Activated CD4-positive, alpha-beta T cell treated with anti-CD3 and anti-CD28 coated beads, Interleukin-2, amount 10 ng/mL, durations not matched to agents 24 days and 14 days (primary cell): ENCODE measurements at regions of chr1 and their contacts with region 1.

Region 1: DNA sequence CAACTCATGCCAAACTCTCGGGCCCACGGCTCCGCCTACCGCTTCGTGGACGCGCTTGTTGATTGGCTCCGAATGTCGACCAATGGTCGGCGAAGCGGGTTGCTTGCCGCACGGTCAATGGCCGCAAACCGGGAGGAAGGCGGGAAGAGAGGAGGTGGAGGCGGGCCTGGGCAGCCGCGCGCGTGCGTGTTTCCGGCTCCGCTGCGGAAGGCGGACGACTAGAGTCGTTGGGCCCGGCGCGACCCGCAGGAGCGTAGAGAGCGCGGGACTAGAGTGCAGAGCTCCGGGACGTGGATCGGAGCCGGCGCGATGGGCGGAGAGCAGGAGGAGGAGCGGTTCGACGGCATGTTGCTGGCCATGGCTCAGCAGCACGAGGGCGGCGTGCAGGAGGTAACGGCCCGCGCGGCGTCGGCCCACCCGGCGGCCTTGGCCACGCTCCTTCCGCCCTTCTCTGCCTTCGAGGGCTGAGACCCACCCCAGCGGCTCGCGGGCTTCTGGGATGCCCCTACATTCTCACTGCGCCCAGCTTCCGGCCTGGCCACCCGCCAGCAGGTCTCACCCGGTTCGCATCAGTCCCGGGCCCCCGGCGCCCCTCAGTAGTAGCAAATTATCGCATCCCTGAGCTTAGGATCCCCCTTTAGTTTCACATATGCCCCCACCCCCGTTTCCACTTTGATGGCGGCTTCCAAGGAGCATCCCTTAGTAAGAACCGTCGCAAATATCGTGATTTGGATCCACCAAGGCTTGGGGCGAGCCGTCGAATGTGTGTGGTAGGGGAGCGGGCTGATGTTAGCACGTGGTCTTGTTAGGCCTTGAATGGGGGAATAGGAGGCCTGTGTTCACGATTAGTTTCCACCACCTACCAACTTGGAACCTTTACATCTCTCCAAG is at the start of gene NUDC:
- DNase-seq: peak; percentile 99
- H3K4me3 Mint-ChIP-seq: peak within 1 kb of the TSS; percentile 99
- H3K27ac Mint-ChIP-seq: peak within 1 kb of the TSS; percentile 99
- H3K4me1 Mint-ChIP-seq: peaks cover 29% of the 10 kb centered on the region
- H3K27me3 Mint-ChIP-seq: no peaks in the 10 kb centered on the region
- total RNA-seq, gene NUDC: 169 and 171 TPM in 2 replicates

Region 2: GRCh38 chr1:26431979-26432695 is 489.6 kb before region 1 on chr1 and contains the start of gene DHDDS:
- intact Hi-C with region 1: loop called (anchors 1 kb)
- DNase-seq: peak; percentile 100
- H3K4me3 Mint-ChIP-seq: peak within 1 kb of the TSS; percentile 98
- H3K27ac Mint-ChIP-seq: peak within 1 kb of the TSS; percentile 95
- H3K4me1 Mint-ChIP-seq: peaks cover 17% of the 10 kb centered on the region
- H3K27me3 Mint-ChIP-seq: peaks cover 5% of the 10 kb centered on the region
- total RNA-seq, gene DHDDS: 57.0 and 60.2 TPM in 2 replicates

Region 3: GRCh38 chr1:26541816-26542711 is 379.7 kb before region 1 on chr1:
- intact Hi-C with region 1: loop called (anchors 1 kb)
- DNase-seq: peak; percentile 93
- H3K4me3 Mint-ChIP-seq: peak overlapping the region; percentile 83
- H3K27ac Mint-ChIP-seq: peak overlapping the region; percentile 91
- H3K4me1 Mint-ChIP-seq: peaks cover 78% of the 10 kb centered on the region
- H3K27me3 Mint-ChIP-seq: no peaks in the 10 kb centered on the region

Region 4: GRCh38 chr1:26889551-26890466 is 32.0 kb before region 1 on chr1 and contains the start of gene GPN2:
- intact Hi-C with region 1: loop called (anchors 1 kb)
- DNase-seq: peak; percentile 95
- H3K4me3 Mint-ChIP-seq: peak within 1 kb of the TSS; percentile 96
- H3K27ac Mint-ChIP-seq: peak within 1 kb of the TSS; percentile 94
- H3K4me1 Mint-ChIP-seq: peaks cover 22% of the 10 kb centered on the region
- H3K27me3 Mint-ChIP-seq: no peaks in the 10 kb centered on the region
- total RNA-seq, gene GPN2: 41.8 and 47.1 TPM in 2 replicates

Region 5: GRCh38 chr1:26900001-26900814 is 21.6 kb before region 1 on chr1 and contains the start of gene GPATCH3:
- intact Hi-C with region 1: loop called (anchors 2 kb)
- DNase-seq: peak; percentile 96
- H3K4me3 Mint-ChIP-seq: peak within 1 kb of the TSS; percentile 96
- H3K27ac Mint-ChIP-seq: peak within 1 kb of the TSS; percentile 99
- H3K4me1 Mint-ChIP-seq: peaks cover 20% of the 10 kb centered on the region
- H3K27me3 Mint-ChIP-seq: no peaks in the 10 kb centered on the region
- total RNA-seq, gene GPATCH3: 12.1 and 14.2 TPM in 2 replicates

Region 6: DNA sequence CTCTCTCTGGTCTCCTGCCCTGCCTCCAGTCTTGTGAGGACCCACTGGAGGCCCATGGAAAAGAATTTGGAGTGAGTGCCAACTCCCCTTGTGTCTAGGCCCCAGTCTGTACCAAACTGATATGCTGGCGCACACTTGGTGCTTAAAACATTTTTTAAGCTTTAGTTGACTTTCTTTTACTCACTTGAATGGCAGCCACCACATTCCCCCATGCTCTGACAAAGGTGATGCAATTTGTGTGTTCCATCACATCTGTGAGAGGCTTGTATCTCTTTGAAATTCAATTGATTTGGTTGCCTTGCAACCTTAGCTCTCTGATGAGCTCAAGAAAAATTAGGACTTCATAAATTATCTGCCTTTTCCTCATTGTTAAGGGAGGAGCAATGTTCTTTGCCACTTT is 282.2 kb after region 1 on chr1:
- intact Hi-C with region 1: no loop called
- DNase-seq: no peak
- H3K4me3 Mint-ChIP-seq: no peak overlapping the region
- H3K27ac Mint-ChIP-seq: no peak overlapping the region
- H3K4me1 Mint-ChIP-seq: no peaks in the 10 kb centered on the region
- H3K27me3 Mint-ChIP-seq: peaks cover 3% of the 10 kb centered on the region